ENCODE measurements at regions of chr7 and their contacts with region 1.

Region 1: GRCh38 chr7:157273208-157274093 is 63.4 kb upstream of the DNAJB6 start:
- DNase-seq: peak; percentile 90
- CTCF ChIP-seq: peak; percentile 96

Region 2: DNA sequence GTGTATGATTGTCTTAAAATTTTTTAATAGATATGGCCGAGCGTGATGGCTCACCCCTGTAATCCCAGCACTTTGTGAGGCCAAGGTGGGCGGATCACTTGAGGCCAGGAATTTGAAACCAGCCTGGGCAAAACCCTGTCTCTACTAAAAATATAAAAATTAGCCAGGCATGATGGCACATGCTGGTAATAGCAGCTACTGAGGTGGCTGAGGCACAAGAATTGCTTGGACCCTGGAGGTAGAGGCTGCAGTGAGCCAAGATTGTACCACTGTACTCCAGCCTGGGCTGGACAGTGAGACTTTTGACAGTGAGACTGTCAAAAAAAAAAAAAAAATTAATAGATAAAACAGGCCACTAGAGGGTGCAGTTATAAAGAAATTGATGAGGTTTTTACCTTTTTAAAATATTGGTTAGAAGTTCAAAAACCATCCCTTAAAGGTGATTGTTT is 303.5 kb before region 1 on chr7:
- CTCF ChIA-PET with region 1: interaction called, 67 read pairs
- POLR2A ChIA-PET with region 1: no interaction called
- DNase-seq: no peak
- CTCF ChIP-seq: peak; percentile 0

Region 3: DNA sequence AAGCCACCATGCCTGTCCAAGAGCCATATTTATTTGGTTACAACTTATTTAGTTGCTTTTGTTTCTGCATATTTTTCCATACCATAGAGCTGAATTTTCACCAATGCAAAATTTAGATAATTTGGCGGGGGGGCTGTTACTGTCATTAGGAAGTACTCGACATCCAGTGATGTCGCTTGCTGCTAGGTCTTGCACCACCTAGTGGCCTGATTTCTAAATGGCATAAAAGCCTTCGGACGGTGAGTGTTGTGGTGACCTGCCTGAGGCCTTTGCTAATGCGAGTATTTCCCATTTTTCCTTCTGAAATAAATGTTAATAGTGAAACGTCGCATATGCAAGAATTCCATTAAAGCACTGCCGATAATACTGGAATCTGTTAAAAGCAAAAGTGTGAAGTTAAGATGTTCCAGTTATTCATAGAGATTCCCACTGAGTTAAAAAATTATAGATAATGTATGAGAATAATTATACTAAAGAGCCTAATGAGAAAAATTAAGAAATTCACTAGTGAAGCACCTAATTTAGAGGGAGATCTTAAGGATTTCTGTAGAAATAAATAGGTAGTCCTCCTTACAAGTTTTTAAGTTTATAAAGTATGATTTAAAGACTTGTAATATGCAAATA is 22.7 kb before region 1 on chr7:
- CTCF ChIA-PET with region 1: interaction called, 11 read pairs
- POLR2A ChIA-PET with region 1: no interaction called
- DNase-seq: peak; percentile 65
- CTCF ChIP-seq: peak; percentile 76

Region 4: DNA sequence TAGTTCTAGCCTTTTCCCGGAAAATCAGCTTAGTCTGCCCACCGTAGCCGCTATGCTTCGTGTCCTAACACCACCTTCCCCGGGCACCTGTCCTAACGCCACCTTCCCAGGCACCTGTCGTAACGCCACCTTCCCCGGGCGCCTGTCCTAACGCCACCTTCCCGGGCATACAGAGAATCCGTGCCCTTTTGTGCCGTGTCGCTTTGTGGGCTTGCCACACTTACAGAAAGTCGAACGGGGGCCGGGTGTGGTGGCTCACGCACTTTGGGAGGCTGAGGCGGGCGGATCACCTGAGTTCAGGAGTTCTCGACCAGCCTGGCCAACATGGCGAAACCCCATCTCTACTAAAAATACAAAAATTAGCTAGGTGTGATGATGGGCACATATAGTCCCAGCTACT is 10.3 kb before region 1 on chr7:
- CTCF ChIA-PET with region 1: interaction called, 17 read pairs
- POLR2A ChIA-PET with region 1: no interaction called
- DNase-seq: no peak
- CTCF ChIP-seq: no peak

Region 5: GRCh38 chr7:157292699-157293412 is 19.4 kb after region 1 on chr7:
- CTCF ChIA-PET with region 1: interaction called, 16 read pairs
- POLR2A ChIA-PET with region 1: no interaction called
- DNase-seq: no peak
- CTCF ChIP-seq: no peak

Region 6: DNA sequence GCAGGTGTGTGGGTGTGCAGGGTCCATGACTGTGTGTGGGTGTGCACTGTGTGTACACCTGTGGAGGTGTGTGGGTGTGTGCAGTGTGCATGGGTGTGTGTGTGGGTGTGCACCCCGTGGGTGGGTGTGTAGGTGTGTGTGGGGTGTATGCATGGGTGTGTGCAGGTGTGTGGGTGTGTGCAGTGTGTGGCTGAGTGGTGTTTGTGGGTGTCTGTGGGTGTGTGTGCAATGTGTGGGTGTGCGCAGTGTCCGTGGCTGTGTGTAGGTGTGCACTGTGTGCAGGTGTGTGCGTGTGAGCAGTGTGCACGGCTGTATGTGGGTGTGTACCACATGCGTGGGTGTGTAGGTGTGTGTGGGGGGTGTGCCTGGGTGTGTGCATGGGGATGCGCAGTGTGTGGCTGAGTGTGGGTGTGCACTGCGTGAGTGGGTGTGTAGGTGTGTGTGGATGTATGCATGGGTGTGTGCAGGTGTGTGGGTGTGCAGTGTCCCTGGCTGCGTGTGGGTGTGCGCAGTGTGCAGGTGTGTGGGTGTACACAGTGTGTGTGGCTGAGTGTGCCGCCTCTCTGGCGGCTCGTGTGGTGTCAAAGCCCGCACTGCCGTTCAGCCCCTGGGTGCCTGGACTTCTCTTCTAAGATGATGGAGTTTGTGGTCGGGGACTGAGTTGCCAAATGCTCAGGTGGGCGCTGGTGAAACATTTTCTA is 271.7 kb after region 1 on chr7:
- CTCF ChIA-PET with region 1: no interaction called
- POLR2A ChIA-PET with region 1: no interaction called
- DNase-seq: no peak
- CTCF ChIP-seq: no peak